ENCODE measurements at regions of chr7 and their contacts with region 1.

Region 1: GRCh38 chr7:134565643-134566136 is 16.8 kb downstream of the AKR1B15 start:
- DNase-seq: no peak

Region 2: DNA sequence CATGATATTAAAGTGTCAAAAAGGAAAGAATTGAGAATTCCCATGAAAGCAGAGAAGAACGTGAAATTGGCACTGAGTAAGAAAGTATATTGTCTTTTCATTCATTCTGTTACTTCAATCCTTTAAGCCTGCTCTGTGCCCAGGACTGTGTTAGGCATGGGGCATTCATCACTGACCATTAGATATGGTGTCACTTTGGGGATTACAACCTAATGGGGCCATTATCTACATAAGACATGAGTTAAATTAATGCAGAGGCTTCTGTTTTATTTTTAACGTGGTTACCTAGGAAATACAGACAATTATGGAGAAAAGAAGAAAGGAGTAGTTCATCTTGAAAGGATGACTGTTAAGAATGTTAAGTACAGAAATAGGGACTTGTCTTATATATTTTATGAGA is 602.1 kb before region 1 on chr7:
- intact Hi-C with region 1: no loop called
- DNase-seq: no peak

Region 3: DNA sequence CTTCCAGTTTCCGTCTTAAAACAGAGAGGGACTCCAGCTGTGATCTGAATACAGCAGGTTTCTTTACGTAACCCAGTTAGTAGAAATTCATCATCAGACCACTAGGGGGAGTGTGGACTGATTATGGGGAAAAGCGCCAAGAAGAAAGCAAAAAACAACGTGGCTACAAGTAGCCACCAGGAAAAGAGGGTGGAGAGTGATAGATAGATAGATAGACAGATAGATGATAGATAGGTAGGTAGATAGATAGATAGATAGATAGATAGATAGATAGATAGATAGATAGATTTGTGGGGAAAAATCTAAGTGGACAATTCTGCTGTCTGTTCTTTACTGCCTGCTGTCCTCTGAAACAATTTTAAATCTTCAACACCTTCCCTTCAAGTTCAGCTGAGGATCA is 51.0 kb before region 1 on chr7:
- intact Hi-C with region 1: no loop called
- DNase-seq: no peak

Region 4: DNA sequence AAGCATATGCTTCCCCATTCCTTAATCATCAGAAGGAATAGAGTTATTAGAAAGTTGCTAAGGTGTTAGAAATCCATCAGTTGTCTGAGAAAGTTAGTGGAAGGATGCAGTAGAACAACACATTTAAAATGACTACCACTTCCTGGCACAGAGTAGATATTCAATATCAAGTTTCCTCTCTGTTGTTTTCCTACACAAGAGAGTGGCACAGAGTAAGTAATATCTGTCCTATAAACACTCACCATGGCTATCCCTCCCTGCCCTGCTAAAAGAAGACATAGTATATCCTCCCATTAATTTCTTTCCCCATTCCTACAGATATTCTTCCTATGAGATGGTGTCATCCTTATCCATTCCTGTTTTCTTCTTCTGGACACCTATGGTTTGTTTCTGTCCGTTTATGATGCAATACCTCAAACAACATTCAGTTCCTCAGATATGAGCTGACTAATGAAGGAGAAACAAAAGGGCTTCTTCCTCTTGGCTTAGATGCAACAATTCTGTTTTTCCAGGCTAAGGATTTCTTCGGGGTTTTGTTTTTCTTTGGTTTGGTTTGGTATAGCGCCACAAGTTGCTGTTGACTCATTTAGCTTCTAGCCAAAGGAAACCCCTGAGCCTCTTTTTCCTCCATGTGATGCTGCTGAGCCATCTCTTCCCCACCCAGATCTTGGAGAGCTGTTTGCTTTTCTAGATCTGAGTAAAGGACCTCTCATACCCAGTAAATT is 48.1 kb after region 1 on chr7:
- intact Hi-C with region 1: no loop called
- DNase-seq: no peak

Region 5: GRCh38 chr7:135313971-135314370 is 748.3 kb after region 1 on chr7:
- intact Hi-C with region 1: loop called in 1 of 2 experiments (anchors 5 kb)
- DNase-seq: no peak

Measured in posterior vena cava (tissue), 2 donors.